ENCODE measurements at regions of chr1 and their contacts with region 1.

Region 1: GRCh38 chr1:101238681-101239094 is 1.9 kb downstream of the S1PR1 start:
- DNase-seq: peak; percentile 77 to 87 (median 84)
- H3K4me3 ChIP-seq: peak overlapping the region; percentile 64
- H3K4me3 Mint-ChIP-seq: peak overlapping the region; percentile 90 to 100 (median 99)
- H3K27ac ChIP-seq: peak overlapping the region; percentile 71
- H3K27ac Mint-ChIP-seq: peak overlapping the region; percentile 78 to 100 (median 98)
- H3K4me1 ChIP-seq: peaks cover 59% of the 10 kb centered on the region
- H3K4me1 Mint-ChIP-seq: peaks cover 62 to 68% (median 68%) of the 10 kb centered on the region in 3 donors
- H3K27me3 ChIP-seq: no peaks in the 10 kb centered on the region
- H3K27me3 Mint-ChIP-seq: peaks cover 0 to 5% of the 10 kb centered on the region in 2 donors

Region 2: GRCh38 chr1:100921109-100921706 is 317.5 kb before region 1 on chr1:
- CTCF ChIA-PET with region 1: interaction called, 39 read pairs
- POLR2A ChIA-PET with region 1: interaction called, 13 read pairs
- DNase-seq: peak in 2 of 5 donors; percentile 40 to 56
- H3K4me3 ChIP-seq: no peak overlapping the region
- H3K4me3 Mint-ChIP-seq: peak overlapping the region in 1 of 7 donors; percentile 32
- H3K27ac ChIP-seq: no peak overlapping the region
- H3K27ac Mint-ChIP-seq: peak overlapping the region; percentile 9 to 84 (median 64)
- H3K4me1 ChIP-seq: peaks cover 40% of the 10 kb centered on the region
- H3K4me1 Mint-ChIP-seq: peaks cover 16 to 40% (median 35%) of the 10 kb centered on the region in 3 donors
- H3K27me3 ChIP-seq: no peaks in the 10 kb centered on the region
- H3K27me3 Mint-ChIP-seq: no peaks in the 10 kb centered on the region

Region 3: GRCh38 chr1:100950781-100951180 is 287.9 kb before region 1 on chr1:
- CTCF ChIA-PET with region 1: interaction called, 6 read pairs
- POLR2A ChIA-PET with region 1: interaction called, 11 read pairs
- DNase-seq: no peak
- H3K4me3 ChIP-seq: peak overlapping the region; percentile 14
- H3K4me3 Mint-ChIP-seq: peak overlapping the region in 2 of 7 donors; percentile 26 to 54
- H3K27ac ChIP-seq: no peak overlapping the region
- H3K27ac Mint-ChIP-seq: peak overlapping the region; percentile 12 to 93 (median 54)
- H3K4me1 ChIP-seq: peaks cover 28% of the 10 kb centered on the region
- H3K4me1 Mint-ChIP-seq: peaks cover 56 to 86% (median 80%) of the 10 kb centered on the region in 3 donors
- H3K27me3 ChIP-seq: no peaks in the 10 kb centered on the region
- H3K27me3 Mint-ChIP-seq: peaks cover 0 to 1% of the 10 kb centered on the region in 2 donors

Region 4: GRCh38 chr1:101136739-101137138 is 101.9 kb before region 1 on chr1:
- CTCF ChIA-PET with region 1: interaction called, 42 read pairs
- POLR2A ChIA-PET with region 1: interaction called, 11 read pairs
- DNase-seq: peak in 2 of 5 donors; percentile 38 to 51
- H3K4me3 ChIP-seq: no peak overlapping the region
- H3K4me3 Mint-ChIP-seq: peak overlapping the region in 6 of 7 donors; percentile 51 to 78 (median 62)
- H3K27ac ChIP-seq: no peak overlapping the region
- H3K27ac Mint-ChIP-seq: peak overlapping the region; percentile 71 to 97 (median 90)
- H3K4me1 ChIP-seq: peaks cover 40% of the 10 kb centered on the region
- H3K4me1 Mint-ChIP-seq: peaks cover 40 to 61% (median 55%) of the 10 kb centered on the region in 3 donors
- H3K27me3 ChIP-seq: no peaks in the 10 kb centered on the region
- H3K27me3 Mint-ChIP-seq: no peaks in the 10 kb centered on the region

Region 5: GRCh38 chr1:101253976-101254674 is 15.4 kb after region 1 on chr1:
- CTCF ChIA-PET with region 1: interaction called, 43 read pairs
- POLR2A ChIA-PET with region 1: interaction called, 7 read pairs
- DNase-seq: no peak
- H3K4me3 ChIP-seq: no peak overlapping the region
- H3K4me3 Mint-ChIP-seq: no peak overlapping the region
- H3K27ac ChIP-seq: no peak overlapping the region
- H3K27ac Mint-ChIP-seq: peak overlapping the region in 4 of 8 donors; percentile 9 to 70 (median 34)
- H3K4me1 ChIP-seq: peaks cover 50% of the 10 kb centered on the region
- H3K4me1 Mint-ChIP-seq: peaks cover 52 to 65% (median 62%) of the 10 kb centered on the region in 3 donors
- H3K27me3 ChIP-seq: no peaks in the 10 kb centered on the region
- H3K27me3 Mint-ChIP-seq: no peaks in the 10 kb centered on the region

Region 6: DNA sequence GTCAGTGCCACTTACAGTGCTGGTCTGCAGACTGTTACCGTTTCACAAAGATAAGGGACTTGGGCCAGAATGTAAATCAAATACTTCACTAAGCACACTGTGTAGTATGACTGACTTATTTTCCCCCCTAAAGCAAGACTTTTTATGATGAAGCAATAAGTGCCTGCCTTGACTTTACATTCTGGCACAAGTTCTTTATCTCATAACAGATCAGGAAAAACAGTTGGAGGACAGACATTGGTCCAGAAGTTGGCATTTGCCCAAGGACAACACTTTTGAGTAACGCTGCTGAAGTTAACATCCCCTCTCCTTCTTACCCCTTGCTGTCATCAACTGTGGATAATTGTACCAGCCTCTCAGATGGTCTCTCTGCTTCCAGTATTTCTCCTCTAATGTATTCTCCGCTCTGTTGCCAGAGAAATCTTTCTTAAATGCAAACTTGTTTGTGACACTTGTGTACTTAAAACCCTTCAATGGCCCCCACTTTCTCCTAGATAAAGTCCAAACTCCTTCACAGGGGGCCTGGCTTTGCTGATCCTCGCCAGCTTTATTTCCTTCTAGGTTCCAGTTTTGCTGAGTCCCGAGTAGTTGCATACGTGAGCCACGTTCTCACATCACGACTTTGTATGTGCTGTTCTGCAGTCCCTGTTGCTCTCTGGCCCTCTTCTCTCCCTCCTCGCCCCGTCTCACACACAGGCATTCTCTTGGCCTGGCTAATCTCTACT is 43.8 kb after region 1 on chr1:
- CTCF ChIA-PET with region 1: interaction called, 214 read pairs
- POLR2A ChIA-PET with region 1: interaction called, 9 read pairs
- DNase-seq: no peak
- H3K4me3 ChIP-seq: no peak overlapping the region
- H3K4me3 Mint-ChIP-seq: peak overlapping the region; percentile 3 to 82 (median 34)
- H3K27ac ChIP-seq: no peak overlapping the region
- H3K27ac Mint-ChIP-seq: peak overlapping the region; percentile 83 to 99 (median 96)
- H3K4me1 ChIP-seq: peaks cover 95% of the 10 kb centered on the region
- H3K4me1 Mint-ChIP-seq: peaks cover 92 to 96% (median 95%) of the 10 kb centered on the region in 3 donors
- H3K27me3 ChIP-seq: no peaks in the 10 kb centered on the region
- H3K27me3 Mint-ChIP-seq: no peaks in the 10 kb centered on the region

Region 7: GRCh38 chr1:101309334-101310311 is 70.9 kb after region 1 on chr1:
- CTCF ChIA-PET with region 1: interaction called, 5 read pairs
- POLR2A ChIA-PET with region 1: interaction called, 18 read pairs
- DNase-seq: peak; percentile 60 to 91 (median 87)
- H3K4me3 ChIP-seq: peak overlapping the region; percentile 56
- H3K4me3 Mint-ChIP-seq: peak overlapping the region; percentile 48 to 89 (median 82)
- H3K27ac ChIP-seq: peak overlapping the region; percentile 63
- H3K27ac Mint-ChIP-seq: peak overlapping the region; percentile 87 to 99 (median 98)
- H3K4me1 ChIP-seq: peaks cover 62% of the 10 kb centered on the region
- H3K4me1 Mint-ChIP-seq: peaks cover 73 to 80% (median 79%) of the 10 kb centered on the region in 3 donors
- H3K27me3 ChIP-seq: no peaks in the 10 kb centered on the region
- H3K27me3 Mint-ChIP-seq: no peaks in the 10 kb centered on the region

Region 8: GRCh38 chr1:101474039-101474665 is 235.5 kb after region 1 on chr1:
- CTCF ChIA-PET with region 1: no interaction called
- POLR2A ChIA-PET with region 1: no interaction called
- DNase-seq: no peak
- H3K4me3 ChIP-seq: no peak overlapping the region
- H3K4me3 Mint-ChIP-seq: no peak overlapping the region
- H3K27ac ChIP-seq: no peak overlapping the region
- H3K27ac Mint-ChIP-seq: no peak overlapping the region
- H3K4me1 ChIP-seq: no peaks in the 10 kb centered on the region
- H3K4me1 Mint-ChIP-seq: peaks cover 0 to 9% (median 0%) of the 10 kb centered on the region in 3 donors
- H3K27me3 ChIP-seq: no peaks in the 10 kb centered on the region
- H3K27me3 Mint-ChIP-seq: peaks cover 0 to 15% of the 10 kb centered on the region in 2 donors

Measured in CD8-positive, alpha-beta memory T cell (primary cell).